ENCODE measurements at regions of chr1 and their contacts with region 1.

Region 1: GRCh38 chr1:180586671-180587155 is 27.9 kb downstream of the OVAAL start:
- DNase-seq: peak in 2 of 4 experiments; percentile 33 to 73
- ATAC-seq: peak; percentile 6
- H3K4me3 ChIP-seq: no peak overlapping the region
- H3K27ac ChIP-seq: peak overlapping the region; percentile 93
- H3K4me1 ChIP-seq: peaks cover 21 to 29% of the 10 kb centered on the region in 2 experiments
- H3K27me3 ChIP-seq: no peaks in the 10 kb centered on the region
- CTCF ChIP-seq: no peak
- EP300 ChIP-seq: no peak
- POLR2A ChIP-seq: no peak
- RAD21 ChIP-seq: no peak

Region 2: DNA sequence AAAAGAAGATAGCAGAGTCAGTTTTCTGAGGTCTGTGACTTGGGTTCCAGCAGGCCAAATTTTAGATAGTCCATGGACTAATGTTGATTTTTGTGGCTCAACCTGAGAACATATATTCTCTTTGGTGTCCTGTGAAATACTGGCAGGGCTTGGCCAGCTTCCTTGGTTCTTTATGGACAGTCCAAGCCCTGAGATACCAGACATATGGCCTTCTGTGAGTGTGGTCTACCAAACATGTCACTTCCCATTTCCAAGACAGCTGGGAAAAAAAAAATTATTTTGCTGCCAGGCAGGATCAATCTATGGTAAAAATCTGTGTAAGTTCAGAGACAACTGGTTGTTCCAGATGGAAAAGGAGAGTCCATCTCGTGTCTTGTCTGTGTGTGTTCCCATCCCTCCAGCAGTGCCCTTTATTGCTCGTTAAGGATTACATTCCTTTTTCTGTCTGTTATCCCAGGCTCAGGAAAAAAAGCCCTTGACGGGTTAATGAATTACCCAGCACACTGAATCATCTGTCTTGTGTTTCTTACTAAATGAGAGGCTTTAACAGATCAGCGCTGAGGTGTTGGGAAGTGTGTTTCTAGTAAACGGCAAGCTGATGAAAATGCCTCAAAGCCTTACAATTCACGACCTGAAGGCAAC is 11.7 kb after region 1 on chr1:
- CTCF ChIA-PET with region 1: no interaction called
- POLR2A ChIA-PET with region 1: interaction called, 14 read pairs
- in situ Hi-C with region 1: no loop called
- intact Hi-C with region 1: no loop called
- DNase-seq: no peak
- ATAC-seq: no peak
- H3K4me3 ChIP-seq: no peak overlapping the region
- H3K27ac ChIP-seq: no peak overlapping the region
- H3K4me1 ChIP-seq: peaks cover 15 to 30% of the 10 kb centered on the region in 2 experiments
- H3K27me3 ChIP-seq: no peaks in the 10 kb centered on the region
- CTCF ChIP-seq: no peak
- EP300 ChIP-seq: no peak
- POLR2A ChIP-seq: no peak
- RAD21 ChIP-seq: no peak